ENCODE measurements at regions of chr6 and their contacts with region 1.

Region 1: DNA sequence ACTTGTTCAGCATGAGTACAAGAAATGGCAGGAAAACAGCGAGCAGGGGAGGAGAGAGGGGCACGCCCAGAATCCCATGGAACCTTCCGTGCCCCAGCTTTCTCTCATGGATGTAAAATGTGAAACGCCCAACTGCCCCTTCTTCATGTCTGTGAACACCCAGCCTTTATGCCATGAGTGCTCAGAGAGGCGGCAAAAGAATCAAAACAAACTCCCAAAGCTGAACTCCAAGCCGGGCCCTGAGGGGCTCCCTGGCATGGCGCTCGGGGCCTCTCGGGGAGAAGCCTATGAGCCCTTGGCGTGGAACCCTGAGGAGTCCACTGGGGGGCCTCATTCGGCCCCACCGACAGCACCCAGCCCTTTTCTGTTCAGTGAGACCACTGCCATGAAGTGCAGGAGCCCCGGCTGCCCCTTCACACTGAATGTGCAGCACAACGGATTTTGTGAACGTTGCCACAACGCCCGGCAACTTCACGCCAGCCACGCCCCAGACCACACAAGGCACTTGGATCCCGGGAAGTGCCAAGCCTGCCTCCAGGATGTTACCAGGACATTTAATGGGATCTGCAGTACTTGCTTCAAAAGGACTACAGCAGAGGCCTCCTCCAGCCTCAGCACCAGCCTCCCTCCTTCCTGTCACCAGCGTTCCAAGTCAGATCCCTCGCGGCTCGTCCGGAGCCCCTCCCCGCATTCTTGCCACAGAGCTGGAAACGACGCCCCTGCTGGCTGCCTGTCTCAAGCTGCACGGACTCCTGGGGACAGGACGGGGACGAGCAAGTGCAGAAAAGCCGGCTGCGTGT is 11.6 kb downstream of the TNFAIP3 start:
- ATAC-seq: peak in 5 of 8 experiments; percentile 69 to 96 (median 81)
- H3K4me3 ChIP-seq: no peak overlapping the region
- H3K27ac ChIP-seq: no peak overlapping the region
- H3K4me1 ChIP-seq: peaks cover 0 to 9% of the 10 kb centered on the region in 2 donors

Region 2: GRCh38 chr6:137944793-137945498 is 66.3 kb after region 1 on chr6:
- in situ Hi-C with region 1: loop called in 1 of 9 experiments (anchors 5 kb)
- ATAC-seq: peak in 6 of 8 experiments; percentile 47 to 90 (median 60)
- H3K4me3 ChIP-seq: no peak overlapping the region
- H3K27ac ChIP-seq: no peak overlapping the region
- H3K4me1 ChIP-seq: no peaks in the 10 kb centered on the region

Region 3: GRCh38 chr6:138869398-138869797 is 990.7 kb after region 1 on chr6:
- in situ Hi-C with region 1: no loop called
- ATAC-seq: peak in 2 of 8 experiments; percentile 20 to 45
- H3K4me3 ChIP-seq: no peak overlapping the region
- H3K27ac ChIP-seq: no peak overlapping the region
- H3K4me1 ChIP-seq: peaks cover 0 to under 1% of the 10 kb centered on the region in 2 donors

Measured in motor neuron (in vitro differentiated cells).